Activated CD4-positive, alpha-beta memory T cell treated with anti-CD3 and anti-CD28 coated beads for 36 hours (primary cell): ENCODE measurements at regions of chr11 and their contacts with region 1.

Region 1: DNA sequence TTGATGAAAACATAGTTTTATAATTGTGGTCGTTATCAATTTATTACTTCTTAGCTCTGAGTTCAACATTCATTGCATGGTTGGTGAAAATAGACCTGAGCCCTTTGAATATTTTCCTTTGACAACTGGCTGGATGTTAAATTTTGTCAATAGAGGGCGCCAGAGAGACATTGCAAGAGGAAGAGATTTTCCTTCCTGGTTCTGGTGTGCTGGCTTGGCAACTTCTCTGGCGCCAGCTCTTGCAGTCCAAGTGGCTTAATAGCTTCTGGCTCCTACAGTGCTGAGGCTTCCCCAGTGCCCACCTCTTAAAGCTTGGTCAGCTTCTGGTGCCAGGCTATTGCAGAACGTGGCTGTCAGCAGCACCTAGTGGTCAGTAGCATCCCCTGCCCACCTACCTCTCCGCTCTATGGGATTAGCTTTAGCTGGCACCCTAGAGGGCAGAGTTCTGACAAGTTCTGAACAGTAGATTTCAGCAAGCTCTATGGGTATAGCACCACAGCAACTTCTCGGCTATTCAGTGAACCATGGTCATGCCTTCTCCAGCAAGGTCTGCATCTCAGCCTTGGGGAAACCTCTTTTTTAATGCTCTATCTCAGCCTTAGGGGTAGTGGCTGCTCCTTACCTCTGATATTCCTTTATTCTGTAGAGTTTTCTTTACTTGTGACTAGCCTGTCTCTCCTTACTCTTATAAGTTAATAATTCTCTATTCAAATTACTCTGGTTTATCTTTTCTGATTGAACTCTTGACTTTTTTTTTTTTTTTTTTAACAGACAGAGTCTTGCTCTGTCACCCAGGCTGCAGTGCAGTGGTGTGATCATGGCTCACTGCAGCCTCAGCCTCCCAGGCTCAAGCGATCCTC is 59.4 kb downstream of the ACER3 start:
- DNase-seq: peak; percentile 56
- H3K4me3 Mint-ChIP-seq: no peak overlapping the region
- H3K27ac Mint-ChIP-seq: no peak overlapping the region
- H3K4me1 Mint-ChIP-seq: peaks cover 4% of the 10 kb centered on the region
- H3K27me3 Mint-ChIP-seq: no peaks in the 10 kb centered on the region

Region 2: DNA sequence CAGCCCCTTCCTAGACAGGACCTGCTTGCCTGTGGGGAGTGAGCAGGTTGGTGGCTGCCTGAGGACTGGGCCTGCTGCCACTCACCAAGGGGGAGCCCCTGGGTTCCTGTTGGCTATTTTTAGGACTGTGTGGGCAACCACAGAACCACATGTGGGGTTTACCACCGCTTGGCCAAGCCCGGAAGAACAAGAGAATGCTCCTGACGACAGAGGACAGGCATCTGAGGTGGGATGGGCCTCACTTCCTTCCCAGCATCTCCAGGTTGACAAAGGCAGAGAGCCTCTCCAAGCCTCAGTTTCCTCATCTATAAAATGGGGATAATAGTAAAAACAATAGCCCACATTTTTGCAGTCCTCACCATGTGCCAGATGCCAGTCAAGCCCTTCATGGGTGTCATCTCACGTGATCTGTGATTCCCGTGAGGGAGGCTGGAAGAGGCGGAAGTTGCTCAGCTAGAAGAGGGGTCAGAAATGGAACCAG is 293.2 kb before region 1 on chr11:
- CTCF ChIA-PET with region 1: no interaction called
- POLR2A ChIA-PET with region 1: no interaction called
- intact Hi-C with region 1: no loop called
- DNase-seq: peak; percentile 87
- H3K4me3 Mint-ChIP-seq: peak overlapping the region; percentile 13
- H3K27ac Mint-ChIP-seq: peak overlapping the region; percentile 53
- H3K4me1 Mint-ChIP-seq: peaks cover 39% of the 10 kb centered on the region
- H3K27me3 Mint-ChIP-seq: no peaks in the 10 kb centered on the region

Region 3: GRCh38 chr11:76734456-76735420 is 185.4 kb before region 1 on chr11:
- CTCF ChIA-PET with region 1: interaction called, 53 read pairs
- POLR2A ChIA-PET with region 1: no interaction called
- intact Hi-C with region 1: no loop called
- DNase-seq: no peak
- H3K4me3 Mint-ChIP-seq: no peak overlapping the region
- H3K27ac Mint-ChIP-seq: no peak overlapping the region
- H3K4me1 Mint-ChIP-seq: no peaks in the 10 kb centered on the region
- H3K27me3 Mint-ChIP-seq: peaks cover 2% of the 10 kb centered on the region

Region 4: GRCh38 chr11:76772100-76772782 is 147.9 kb before region 1 on chr11:
- CTCF ChIA-PET with region 1: no interaction called
- POLR2A ChIA-PET with region 1: no interaction called
- intact Hi-C with region 1: no loop called
- DNase-seq: no peak
- H3K4me3 Mint-ChIP-seq: no peak overlapping the region
- H3K27ac Mint-ChIP-seq: no peak overlapping the region
- H3K4me1 Mint-ChIP-seq: peaks cover 28% of the 10 kb centered on the region
- H3K27me3 Mint-ChIP-seq: peaks cover 3% of the 10 kb centered on the region

Region 5: DNA sequence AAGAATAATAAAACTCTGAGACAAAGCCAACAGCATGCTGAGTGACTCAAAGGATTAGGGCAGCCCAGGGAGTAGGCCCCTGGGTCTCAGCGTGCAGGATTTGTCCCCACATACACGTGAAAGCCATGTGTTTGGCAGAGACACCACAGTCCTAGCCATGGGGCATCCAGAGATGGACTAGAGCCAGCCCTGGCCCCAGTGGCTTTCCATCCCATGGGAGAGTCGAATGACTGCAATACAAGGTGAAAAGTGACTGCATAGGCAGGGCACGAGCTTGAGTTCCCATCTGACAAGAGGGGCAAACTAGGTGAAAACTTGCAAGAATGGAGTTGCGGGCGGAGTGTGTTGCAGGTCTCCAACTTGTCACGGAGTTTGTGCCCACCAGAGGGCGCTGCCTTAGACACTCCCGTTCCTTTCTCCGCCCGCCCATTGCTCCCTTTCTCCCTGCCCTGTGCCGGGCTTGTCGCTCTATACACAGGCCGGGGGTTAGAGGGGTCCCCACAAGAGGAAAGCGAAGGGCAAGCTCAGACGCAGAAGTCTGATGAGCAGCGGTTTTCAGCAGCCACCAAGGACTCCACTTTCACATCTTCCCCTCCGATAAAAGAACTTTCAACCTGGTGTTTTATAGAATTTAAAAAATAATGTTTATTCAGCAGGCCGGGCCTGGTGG is 112.8 kb before region 1 on chr11:
- CTCF ChIA-PET with region 1: interaction called, 132 read pairs
- POLR2A ChIA-PET with region 1: no interaction called
- intact Hi-C with region 1: loop called (anchors 1 kb)
- DNase-seq: peak; percentile 81
- H3K4me3 Mint-ChIP-seq: no peak overlapping the region
- H3K27ac Mint-ChIP-seq: no peak overlapping the region
- H3K4me1 Mint-ChIP-seq: peaks cover 32% of the 10 kb centered on the region
- H3K27me3 Mint-ChIP-seq: peaks cover 22% of the 10 kb centered on the region

Region 6: DNA sequence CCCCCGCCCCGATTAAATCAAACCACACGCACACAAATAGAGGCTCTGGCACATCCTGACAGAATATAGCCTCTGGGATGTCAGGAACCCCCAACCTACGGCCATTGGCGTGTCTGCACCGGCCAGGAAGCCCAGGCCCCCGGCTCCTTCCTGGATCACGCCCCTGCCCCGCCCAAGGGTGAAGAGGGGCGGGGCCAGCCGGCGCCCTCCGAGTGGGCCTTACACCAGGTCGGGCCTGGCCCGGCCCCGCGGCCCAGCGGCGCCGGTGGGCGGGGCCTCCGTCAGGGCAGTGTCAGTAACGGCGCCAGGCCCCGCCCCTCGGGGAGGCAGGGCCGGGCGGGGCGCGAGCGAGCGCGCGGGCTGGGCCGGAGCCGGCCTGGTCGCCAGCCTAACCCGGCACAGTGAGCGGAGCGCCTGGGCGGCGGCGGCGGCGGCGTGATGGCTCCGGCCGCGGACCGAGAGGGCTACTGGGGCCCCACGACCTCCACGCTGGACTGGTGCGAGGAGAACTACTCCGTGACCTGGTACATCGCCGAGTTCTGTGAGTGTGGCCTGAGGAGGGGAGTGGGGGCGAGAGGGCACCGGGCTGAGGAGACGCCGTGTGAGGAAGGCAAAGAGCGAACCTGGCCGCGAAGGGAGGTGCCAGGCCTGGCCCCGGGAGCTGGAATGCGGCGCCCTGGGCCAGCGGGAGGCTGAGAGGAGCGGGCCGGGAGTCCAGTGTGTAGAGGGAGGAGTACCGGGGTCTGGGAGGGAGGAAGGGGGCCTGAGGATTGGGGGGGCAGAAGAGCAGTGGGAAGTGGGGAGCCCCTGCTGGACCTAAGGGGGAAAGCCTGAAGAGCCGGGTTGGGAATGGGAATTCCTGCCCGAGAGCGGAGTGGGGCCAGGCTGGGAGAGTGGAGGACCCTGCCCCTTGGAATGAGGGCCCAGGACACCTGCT is 59.3 kb before region 1 on chr11 and contains the start of gene ACER3:
- CTCF ChIA-PET with region 1: interaction called, 5 read pairs
- POLR2A ChIA-PET with region 1: no interaction called
- intact Hi-C with region 1: loop called (anchors 5 kb)
- DNase-seq: peak; percentile 91
- H3K4me3 Mint-ChIP-seq: peak within 1 kb of the TSS; percentile 80
- H3K27ac Mint-ChIP-seq: no peak within 1 kb of the TSS
- H3K4me1 Mint-ChIP-seq: peaks cover 15% of the 10 kb centered on the region
- H3K27me3 Mint-ChIP-seq: no peaks in the 10 kb centered on the region
- total RNA-seq, gene ACER3: 10.5 to 10.9 TPM

Region 7: GRCh38 chr11:76974179-76974891 is 54.2 kb after region 1 on chr11:
- CTCF ChIA-PET with region 1: interaction called, 11 read pairs
- POLR2A ChIA-PET with region 1: no interaction called
- intact Hi-C with region 1: no loop called
- DNase-seq: no peak
- H3K4me3 Mint-ChIP-seq: no peak overlapping the region
- H3K27ac Mint-ChIP-seq: no peak overlapping the region
- H3K4me1 Mint-ChIP-seq: no peaks in the 10 kb centered on the region
- H3K27me3 Mint-ChIP-seq: no peaks in the 10 kb centered on the region

Region 8: DNA sequence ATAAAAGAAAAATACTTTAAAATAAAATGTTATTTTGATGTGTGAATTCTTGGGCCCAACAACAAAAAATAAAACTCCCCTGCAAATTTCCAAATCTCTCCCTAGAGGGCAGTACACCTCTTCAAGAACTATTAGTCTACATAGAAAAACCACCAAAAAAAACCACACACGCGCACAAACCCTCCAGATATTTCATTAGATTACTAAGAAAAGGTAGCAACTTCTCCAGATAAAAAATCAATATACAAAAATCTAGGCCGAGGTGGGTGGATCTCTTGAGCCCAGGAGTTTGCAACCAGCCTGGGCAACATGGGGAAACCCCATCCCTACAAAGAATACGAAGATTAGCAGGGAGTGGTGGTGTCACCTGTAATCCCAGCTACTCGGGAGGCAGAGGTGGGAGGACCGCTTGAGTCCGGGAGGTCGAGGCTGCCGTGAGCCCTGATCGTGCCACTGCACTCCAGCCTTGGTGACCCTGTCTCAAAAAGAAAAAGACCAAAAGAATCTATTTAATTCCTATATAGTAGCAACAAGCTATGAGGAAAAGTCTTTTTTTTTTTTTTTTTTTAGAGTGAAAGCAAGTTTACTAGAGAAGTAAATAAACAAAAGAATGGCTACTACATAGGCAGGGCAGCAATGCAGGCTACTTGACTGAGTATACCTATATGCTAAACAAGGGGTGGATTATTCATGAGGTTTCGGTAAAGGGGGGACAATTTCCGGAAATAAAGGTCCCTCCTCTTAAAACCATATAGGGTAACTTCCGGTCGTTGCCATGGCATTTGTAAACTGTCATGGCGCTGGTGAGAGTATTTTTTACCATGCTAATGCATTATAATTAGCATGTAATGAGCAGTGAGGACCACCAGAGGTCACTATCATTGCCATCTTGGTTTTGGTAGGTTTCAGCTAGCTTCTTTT is 127.2 kb after region 1 on chr11:
- CTCF ChIA-PET with region 1: interaction called, 12 read pairs
- POLR2A ChIA-PET with region 1: no interaction called
- intact Hi-C with region 1: loop called (anchors 1 kb)
- DNase-seq: peak; percentile 81
- H3K4me3 Mint-ChIP-seq: peak overlapping the region; percentile 62
- H3K27ac Mint-ChIP-seq: peak overlapping the region; percentile 51
- H3K4me1 Mint-ChIP-seq: peaks cover 13% of the 10 kb centered on the region
- H3K27me3 Mint-ChIP-seq: peaks cover 6% of the 10 kb centered on the region

Region 9: DNA sequence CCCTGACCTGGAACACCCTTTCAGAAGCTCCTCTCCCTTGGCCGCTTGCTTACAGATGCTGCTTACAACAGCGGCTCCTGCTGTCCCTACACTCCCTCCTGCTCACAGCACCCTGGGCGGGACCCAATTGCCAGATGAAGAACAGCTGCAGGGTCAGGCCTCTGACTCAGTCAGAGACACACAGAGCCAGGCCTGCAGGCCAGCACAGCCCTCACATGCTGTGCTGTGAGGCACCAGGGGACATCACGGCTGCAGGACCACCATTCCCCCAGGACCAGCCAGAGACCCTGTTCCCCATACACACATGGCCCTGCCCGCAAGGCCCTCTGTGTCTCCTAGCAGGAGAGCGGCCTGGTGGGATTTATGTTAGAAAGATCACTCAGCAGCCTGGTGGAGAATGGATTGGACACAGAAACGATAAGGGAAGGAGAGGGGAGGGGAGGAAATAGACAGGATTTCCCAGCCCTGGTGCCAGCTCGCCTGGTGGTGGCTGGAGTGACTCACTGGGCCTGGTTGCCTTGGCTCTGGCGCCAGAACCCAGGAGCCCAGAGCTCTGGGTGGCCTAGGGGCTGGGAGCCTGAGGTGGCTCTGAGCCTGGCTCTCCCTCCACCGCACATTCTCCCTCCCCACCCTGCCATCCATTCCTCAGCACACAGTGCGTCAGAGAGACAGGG is 153.3 kb after region 1 on chr11:
- CTCF ChIA-PET with region 1: no interaction called
- POLR2A ChIA-PET with region 1: no interaction called
- intact Hi-C with region 1: no loop called
- DNase-seq: no peak
- H3K4me3 Mint-ChIP-seq: no peak overlapping the region
- H3K27ac Mint-ChIP-seq: no peak overlapping the region
- H3K4me1 Mint-ChIP-seq: peaks cover 11% of the 10 kb centered on the region
- H3K27me3 Mint-ChIP-seq: no peaks in the 10 kb centered on the region